CD8-positive, alpha-beta memory T cell (primary cell): ENCODE measurements at regions of chr5 and their contacts with region 1.

Region 1: DNA sequence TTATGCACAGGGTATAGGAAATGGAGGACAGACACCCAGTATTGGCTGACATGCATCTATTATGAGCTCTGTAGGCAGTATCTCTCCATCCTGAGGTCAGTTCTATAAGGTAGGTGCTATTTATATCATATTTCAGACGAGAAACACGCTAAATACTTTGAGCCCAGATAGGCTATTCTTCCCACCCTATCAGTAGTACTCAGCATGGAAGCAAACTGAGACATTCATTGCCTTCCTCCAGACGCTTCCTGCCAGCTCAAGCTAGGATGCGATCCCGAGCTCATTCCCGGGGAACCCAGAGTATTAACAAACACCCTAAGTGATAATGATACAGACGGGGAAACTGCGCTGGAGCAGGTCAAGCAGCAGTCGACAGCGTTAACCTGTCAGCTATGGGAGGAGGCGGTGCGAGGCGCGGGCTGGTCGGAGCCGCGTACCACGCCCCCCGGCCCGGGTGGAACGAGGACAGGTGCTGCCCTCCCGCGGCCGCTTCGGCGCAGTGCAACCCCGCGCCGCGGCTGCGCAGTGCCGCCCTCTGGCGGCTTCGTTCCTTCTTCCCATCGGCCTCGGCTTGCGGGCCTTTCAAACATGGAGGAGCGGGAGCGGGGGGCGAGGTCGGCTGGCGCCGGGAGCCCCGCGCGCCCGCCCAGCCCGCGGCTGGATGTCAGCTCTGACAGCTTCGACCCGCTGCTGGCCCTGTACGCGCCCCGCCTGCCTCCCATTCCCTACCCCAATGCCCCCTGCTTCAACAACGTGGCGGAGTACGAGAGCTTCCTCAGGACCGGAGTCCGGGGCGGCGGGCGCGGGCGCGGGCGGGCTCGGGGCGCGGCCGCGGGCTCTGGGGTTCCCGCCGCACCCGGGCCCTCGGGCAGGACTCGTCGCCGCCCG is at the start of gene LSM11:
- DNase-seq: peak; percentile 86 to 90 (median 87)
- H3K4me3 ChIP-seq: peak within 1 kb of the TSS; percentile 66
- H3K4me3 Mint-ChIP-seq: peak within 1 kb of the TSS; percentile 87 to 95 (median 94)
- H3K27ac ChIP-seq: no peak within 1 kb of the TSS
- H3K27ac Mint-ChIP-seq: peak within 1 kb of the TSS; percentile 64 to 92 (median 86)
- H3K4me1 ChIP-seq: peaks cover 14% of the 10 kb centered on the region
- H3K4me1 Mint-ChIP-seq: peaks cover 23 to 33% (median 26%) of the 10 kb centered on the region in 3 donors
- H3K27me3 ChIP-seq: no peaks in the 10 kb centered on the region
- H3K27me3 Mint-ChIP-seq: peaks cover 0 to 2% of the 10 kb centered on the region in 2 donors
- total RNA-seq, gene LSM11: 7.8 to 7.9 TPM

Region 2: DNA sequence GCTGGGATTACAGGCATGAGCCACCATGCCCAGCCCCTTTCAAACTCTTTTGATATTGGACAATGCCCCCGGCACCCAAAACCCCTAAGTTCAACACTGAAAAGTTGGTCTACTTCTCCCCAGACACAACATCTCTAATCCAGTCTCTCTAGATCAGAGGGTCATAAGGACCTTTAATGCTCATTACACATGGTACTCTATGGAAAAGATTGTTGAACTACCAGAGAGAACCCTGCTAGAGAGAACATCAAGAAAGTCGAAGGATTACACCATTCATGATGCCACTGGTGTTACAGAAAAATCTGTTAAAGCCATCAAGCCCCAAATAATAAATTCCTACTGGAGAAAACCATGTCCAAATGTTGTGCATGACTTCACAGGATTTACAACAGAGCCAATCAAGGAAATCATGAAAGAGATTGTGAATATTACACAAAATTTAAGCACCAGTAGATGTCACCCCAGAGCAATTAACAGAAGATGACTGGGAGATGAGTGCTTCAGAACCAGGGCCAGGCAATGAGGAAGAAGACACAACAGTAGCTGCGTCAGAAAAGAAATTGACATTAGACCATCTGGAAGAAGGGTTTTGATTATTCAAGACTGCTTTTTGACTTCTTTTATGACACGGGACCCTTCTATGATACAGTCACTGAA is 311.7 kb before region 1 on chr5:
- CTCF ChIA-PET with region 1: interaction called, 36 read pairs
- POLR2A ChIA-PET with region 1: no interaction called
- DNase-seq: peak in 3 of 5 donors; percentile 5 to 37 (median 21)
- H3K4me3 ChIP-seq: no peak overlapping the region
- H3K4me3 Mint-ChIP-seq: no peak overlapping the region
- H3K27ac ChIP-seq: no peak overlapping the region
- H3K27ac Mint-ChIP-seq: peak overlapping the region in 2 of 8 donors; percentile 15 to 47
- H3K4me1 ChIP-seq: no peaks in the 10 kb centered on the region
- H3K4me1 Mint-ChIP-seq: peaks cover 5 to 8% (median 7%) of the 10 kb centered on the region in 3 donors
- H3K27me3 ChIP-seq: no peaks in the 10 kb centered on the region
- H3K27me3 Mint-ChIP-seq: peaks cover 5 to 6% of the 10 kb centered on the region in 2 donors

Region 3: GRCh38 chr5:157651623-157652549 is 91.5 kb before region 1 on chr5 and contains the start of gene SOX30:
- CTCF ChIA-PET with region 1: interaction called, 14 read pairs
- POLR2A ChIA-PET with region 1: no interaction called
- DNase-seq: peak; percentile 59 to 89 (median 77)
- H3K4me3 ChIP-seq: peak within 1 kb of the TSS; percentile 49
- H3K4me3 Mint-ChIP-seq: peak within 1 kb of the TSS; percentile 76 to 91 (median 81)
- H3K27ac ChIP-seq: no peak within 1 kb of the TSS
- H3K27ac Mint-ChIP-seq: peak within 1 kb of the TSS in 7 of 8 donors; percentile 61 to 89 (median 76)
- H3K4me1 ChIP-seq: peaks cover 10% of the 10 kb centered on the region
- H3K4me1 Mint-ChIP-seq: peaks cover 14 to 17% (median 15%) of the 10 kb centered on the region in 3 donors
- H3K27me3 ChIP-seq: no peaks in the 10 kb centered on the region
- H3K27me3 Mint-ChIP-seq: peaks cover 0 to 6% of the 10 kb centered on the region in 2 donors
- total RNA-seq, gene SOX30: 0.09 to 0.11 TPM

Region 4: DNA sequence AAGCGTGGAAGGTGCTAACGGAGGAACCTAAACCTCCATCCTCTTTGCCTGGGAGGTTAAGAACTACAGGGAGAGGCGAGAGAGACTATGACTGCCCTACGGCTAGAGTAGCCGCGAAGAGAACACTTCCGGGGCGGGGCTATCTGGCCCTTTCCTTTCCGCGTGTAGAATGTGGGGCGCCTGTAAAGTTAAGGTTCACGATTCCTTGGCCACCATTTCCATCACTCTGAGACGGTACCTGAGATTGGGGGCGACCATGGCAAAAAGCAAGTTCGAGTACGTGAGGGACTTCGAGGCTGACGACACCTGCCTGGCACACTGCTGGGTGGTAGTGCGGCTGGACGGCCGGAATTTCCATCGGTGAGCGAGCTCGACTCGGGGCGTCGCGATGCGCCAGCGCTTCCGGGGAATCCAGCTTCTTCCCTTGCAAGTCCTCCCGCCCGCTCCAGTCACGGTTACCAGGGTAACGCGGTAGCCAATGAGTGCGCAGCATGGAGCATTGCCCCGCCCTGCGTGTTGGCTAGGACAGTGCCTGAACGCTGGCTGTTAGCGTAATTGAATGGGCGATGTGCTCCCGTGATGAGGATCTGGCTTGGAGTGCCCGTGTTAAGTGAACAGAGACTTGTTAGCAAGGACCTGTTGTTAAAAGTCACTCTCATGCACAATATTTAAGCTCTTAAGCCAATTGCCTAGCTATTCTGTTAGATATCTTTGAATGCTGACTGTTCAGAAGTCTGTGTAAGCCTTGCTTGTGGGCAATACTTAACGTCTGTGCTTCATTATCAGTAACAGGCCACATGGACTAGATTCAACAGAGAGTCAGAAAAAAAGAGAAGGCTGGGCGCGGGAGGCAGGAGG is 11.9 kb before region 1 on chr5 and contains the start of gene THG1L:
- CTCF ChIA-PET with region 1: interaction called, 51 read pairs
- POLR2A ChIA-PET with region 1: interaction called, 5 read pairs
- DNase-seq: peak; percentile 93 to 99 (median 97)
- H3K4me3 ChIP-seq: peak within 1 kb of the TSS; percentile 100
- H3K4me3 Mint-ChIP-seq: peak within 1 kb of the TSS; percentile 90 to 98 (median 94)
- H3K27ac ChIP-seq: peak within 1 kb of the TSS; percentile 88
- H3K27ac Mint-ChIP-seq: peak within 1 kb of the TSS; percentile 85 to 97 (median 96)
- H3K4me1 ChIP-seq: peaks cover 8% of the 10 kb centered on the region
- H3K4me1 Mint-ChIP-seq: peaks cover 17 to 28% (median 21%) of the 10 kb centered on the region in 3 donors
- H3K27me3 ChIP-seq: no peaks in the 10 kb centered on the region
- H3K27me3 Mint-ChIP-seq: peaks cover 0 to 1% of the 10 kb centered on the region in 2 donors
- total RNA-seq, gene THG1L: 31.0 to 34.6 TPM